ENCODE measurements at regions of chr17 and their contacts with region 1.

Region 1: DNA sequence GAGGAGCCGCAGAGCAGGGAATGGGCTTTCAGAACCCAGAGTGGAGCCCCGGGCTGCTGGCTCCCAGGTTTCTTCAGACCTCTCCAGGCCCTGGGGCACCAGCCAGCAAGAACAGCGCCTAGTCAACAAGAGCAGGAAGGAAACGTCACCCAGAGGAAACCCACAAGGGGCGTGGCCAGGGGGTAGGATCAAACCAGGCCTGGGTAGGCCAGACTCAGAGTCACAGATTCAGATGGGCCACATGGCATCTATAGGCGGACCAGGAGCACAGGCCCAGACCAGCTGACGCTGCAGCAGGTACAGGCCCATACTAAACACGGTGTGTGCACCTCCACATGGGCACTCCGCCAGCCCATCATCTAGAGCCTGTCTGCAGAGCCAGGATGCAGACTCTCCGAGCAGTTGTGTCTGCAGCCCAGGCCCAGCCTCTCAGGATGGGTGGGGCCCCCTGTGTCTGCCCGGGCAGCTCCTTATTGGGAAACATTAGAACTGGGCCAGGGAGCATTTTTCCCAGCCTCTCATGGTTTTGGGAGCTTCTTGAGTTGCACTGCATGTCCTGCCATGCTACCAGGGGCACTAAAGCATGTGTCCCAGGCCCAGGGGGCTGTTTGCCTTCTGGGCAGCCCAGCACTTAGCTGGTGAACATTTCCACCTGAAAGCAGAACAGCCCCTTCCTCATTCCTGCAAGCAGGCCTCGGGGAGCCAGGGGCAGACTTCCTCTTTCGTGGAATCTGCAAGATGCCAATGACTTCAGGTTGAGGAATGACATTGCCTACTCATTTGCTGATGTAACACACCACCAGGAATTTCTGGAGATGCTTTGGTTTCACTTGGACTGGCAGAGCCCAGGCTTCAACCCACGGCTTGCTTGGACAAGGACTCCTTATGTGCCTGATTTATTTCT is at the start of gene NLRP1:
- DNase-seq: peak; percentile 99
- H3K4me3 ChIP-seq: peak within 1 kb of the TSS; percentile 15 to 32 (median 31)
- H3K27ac ChIP-seq: peak within 1 kb of the TSS; percentile 84
- H3K4me1 ChIP-seq: peaks cover 41% of the 10 kb centered on the region
- H3K27me3 ChIP-seq: no peaks in the 10 kb centered on the region
- CTCF ChIP-seq: no peak
- total RNA-seq, gene NLRP1: 27.3 to 48.3 TPM

Region 2: GRCh38 chr17:5191541-5192417 is 392.9 kb before region 1 on chr17 and contains the start of gene ZNF594:
- CTCF ChIA-PET with region 1: no interaction called
- dilution Hi-C with region 1: no loop called
- in situ Hi-C with region 1: no loop called
- intact Hi-C with region 1: loop called (anchors 10 kb)
- DNase-seq: peak; percentile 91
- H3K4me3 ChIP-seq: peak within 1 kb of the TSS; percentile 68 to 85 (median 78)
- H3K27ac ChIP-seq: peak within 1 kb of the TSS; percentile 41
- H3K4me1 ChIP-seq: no peaks in the 10 kb centered on the region
- H3K27me3 ChIP-seq: no peaks in the 10 kb centered on the region
- CTCF ChIP-seq: peak; percentile 55 to 80
- total RNA-seq, gene ZNF594: 4.8 to 5.8 TPM

Region 3: GRCh38 chr17:5486204-5487124 is 98.2 kb before region 1 on chr17 and contains the start of gene MIS12:
- CTCF ChIA-PET with region 1: no interaction called
- dilution Hi-C with region 1: no loop called
- in situ Hi-C with region 1: no loop called
- intact Hi-C with region 1: loop called (anchors 1 kb)
- DNase-seq: peak; percentile 99
- H3K4me3 ChIP-seq: peak within 1 kb of the TSS; percentile 74 to 79 (median 79)
- H3K27ac ChIP-seq: peak within 1 kb of the TSS; percentile 94
- H3K4me1 ChIP-seq: peaks cover 8% of the 10 kb centered on the region
- H3K27me3 ChIP-seq: no peaks in the 10 kb centered on the region
- CTCF ChIP-seq: no peak
- total RNA-seq, gene MIS12: 9.7 to 17.5 TPM

Region 4: DNA sequence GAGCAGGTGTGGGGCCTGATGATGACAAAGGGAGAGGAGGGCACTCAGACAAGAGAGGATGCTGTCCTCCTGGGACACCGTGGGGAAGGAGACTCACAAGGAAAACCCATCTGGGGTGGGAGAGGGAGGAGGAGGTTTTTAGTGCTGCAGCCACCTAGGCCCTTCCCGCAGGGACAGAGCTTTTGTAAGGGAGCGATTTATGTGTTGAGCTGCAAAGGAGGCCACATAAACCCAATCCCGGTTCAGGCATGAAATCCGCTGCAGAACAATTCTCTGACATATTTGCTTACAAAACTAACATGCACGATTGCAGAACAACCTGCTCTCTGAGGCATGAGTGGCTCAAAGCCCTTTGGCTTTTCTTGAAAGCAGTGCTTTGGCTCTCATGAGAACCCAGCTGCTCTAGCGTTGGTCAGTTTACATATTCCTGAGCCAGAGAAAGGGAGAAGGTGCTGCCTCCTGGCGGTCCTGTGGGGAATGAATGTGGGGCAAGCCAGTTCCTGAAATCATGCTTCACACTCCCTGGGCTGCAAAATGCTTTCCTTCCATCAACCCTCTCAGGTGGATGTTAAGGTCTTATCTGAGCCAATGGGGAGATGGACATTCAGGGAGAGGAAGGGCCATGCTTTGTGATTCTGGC is 122.1 kb after region 1 on chr17:
- CTCF ChIA-PET with region 1: no interaction called
- dilution Hi-C with region 1: no loop called
- in situ Hi-C with region 1: no loop called
- intact Hi-C with region 1: loop called (anchors 1 kb)
- DNase-seq: peak; percentile 26
- H3K4me3 ChIP-seq: no peak overlapping the region
- H3K27ac ChIP-seq: no peak overlapping the region
- H3K4me1 ChIP-seq: no peaks in the 10 kb centered on the region
- H3K27me3 ChIP-seq: peaks cover 8% of the 10 kb centered on the region
- CTCF ChIP-seq: peak; percentile 62 to 68

Region 5: DNA sequence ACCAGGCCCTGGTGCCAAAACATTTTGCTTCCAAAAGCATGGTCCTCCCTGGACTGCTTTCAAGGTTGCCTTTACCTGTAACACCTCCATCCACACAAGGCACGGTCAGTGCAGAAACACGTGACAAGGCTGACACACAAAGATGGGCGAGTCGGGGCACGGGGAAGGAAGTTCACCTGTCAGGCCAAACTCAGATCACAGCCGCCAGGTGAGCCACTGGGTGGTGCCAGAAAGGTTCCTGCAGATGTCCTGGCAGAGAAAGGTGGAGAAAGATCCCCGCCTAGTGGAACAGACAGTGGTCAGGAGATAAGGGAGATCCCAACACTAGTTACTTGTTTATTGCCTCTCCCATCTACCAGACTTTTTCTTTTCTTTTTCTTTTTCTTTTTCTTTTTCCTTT is 695.0 kb after region 1 on chr17:
- CTCF ChIA-PET with region 1: no interaction called
- dilution Hi-C with region 1: no loop called
- in situ Hi-C with region 1: loop called (anchors 5 kb)
- intact Hi-C with region 1: loop called (anchors 1 kb)
- DNase-seq: peak; percentile 88
- H3K4me3 ChIP-seq: no peak overlapping the region
- H3K27ac ChIP-seq: no peak overlapping the region
- H3K4me1 ChIP-seq: no peaks in the 10 kb centered on the region
- H3K27me3 ChIP-seq: no peaks in the 10 kb centered on the region
- CTCF ChIP-seq: peak; percentile 89 to 94

Region 6: GRCh38 chr17:6651357-6651918 is 1066.8 kb after region 1 on chr17 and contains the starts of genes C17orf100 and MED31:
- CTCF ChIA-PET with region 1: no interaction called
- dilution Hi-C with region 1: no loop called
- in situ Hi-C with region 1: loop called in 1 of 2 experiments (anchors 10 kb)
- intact Hi-C with region 1: loop called (anchors 5 kb)
- DNase-seq: peak; percentile 92
- H3K4me3 ChIP-seq: peak within 1 kb of the TSS; percentile 83 to 100 (median 99)
- H3K27ac ChIP-seq: peak within 1 kb of the TSS; percentile 100
- H3K4me1 ChIP-seq: peaks cover 38% of the 10 kb centered on the region
- H3K27me3 ChIP-seq: no peaks in the 10 kb centered on the region
- CTCF ChIP-seq: no peak
- total RNA-seq, gene C17orf100: 0.67 to 2.5 TPM
- total RNA-seq, gene MED31: 8.3 to 21.0 TPM

Measured in mammary epithelial cell (primary cell).